ENCODE measurements at regions of chr6 and their contacts with region 1.

Region 1: DNA sequence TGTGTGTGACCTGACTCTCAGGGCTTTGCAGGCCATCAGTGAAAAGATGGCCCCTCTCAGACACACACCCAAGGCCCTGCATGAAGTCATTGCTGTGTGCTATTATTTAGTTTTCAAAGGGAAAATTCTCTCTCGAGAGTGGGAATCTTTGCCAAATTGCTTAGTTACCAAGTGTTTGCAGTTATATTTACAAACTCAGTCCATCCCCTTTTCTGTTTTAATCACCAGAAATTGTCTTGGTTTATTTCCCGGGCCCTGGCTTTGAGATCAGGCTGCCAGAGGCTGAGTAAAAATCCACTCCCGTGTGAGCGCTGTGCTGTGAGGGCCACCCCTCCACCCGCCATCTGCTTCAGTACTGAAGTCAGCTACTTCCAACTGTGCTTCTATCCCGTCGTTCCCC is 163.1 kb downstream of the SOD2 start:
- DNase-seq: no peak

Region 2: GRCh38 chr6:158018851-158019361 is 1511.0 kb before region 1 on chr6:
- intact Hi-C with region 1: loop called in 1 of 2 experiments (anchors 5 kb)
- DNase-seq: peak; percentile 76